ENCODE measurements at regions of chr3 and their contacts with region 1.

Region 1: DNA sequence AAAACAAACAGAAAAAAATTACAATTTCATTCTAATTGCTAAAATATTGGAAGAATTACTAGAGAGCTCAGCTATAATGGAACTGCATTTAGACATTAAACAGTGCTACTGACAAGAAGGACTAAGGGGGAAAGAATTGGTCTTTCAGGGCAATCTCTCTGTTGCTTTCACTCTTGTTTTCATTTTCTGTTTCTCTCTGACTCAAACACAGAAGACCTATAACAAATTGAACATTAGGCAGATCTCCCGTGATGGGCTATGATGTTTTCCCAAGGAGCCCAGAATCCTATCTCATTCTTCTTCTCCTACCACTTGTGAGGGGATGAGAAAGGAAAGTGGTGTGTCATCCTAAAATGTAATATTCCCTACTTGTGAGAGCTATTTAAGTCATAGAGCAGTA is 358.0 kb upstream of the TGFBR2 start:
- DNase-seq: no peak
- H3K4me3 ChIP-seq: no peak overlapping the region
- H3K27ac ChIP-seq: no peak overlapping the region
- H3K4me1 ChIP-seq: no peaks in the 10 kb centered on the region
- H3K27me3 ChIP-seq: no peaks in the 10 kb centered on the region
- CTCF ChIP-seq: no peak
- POLR2A ChIP-seq: no peak

Region 2: GRCh38 chr3:30188713-30189112 is 59.7 kb before region 1 on chr3:
- CTCF ChIA-PET with region 1: no interaction called
- POLR2A ChIA-PET with region 1: no interaction called
- dilution Hi-C with region 1: no loop called
- intact Hi-C with region 1: no loop called
- DNase-seq: no peak
- H3K4me3 ChIP-seq: no peak overlapping the region
- H3K27ac ChIP-seq: no peak overlapping the region
- H3K4me1 ChIP-seq: peaks cover 3% of the 10 kb centered on the region
- H3K27me3 ChIP-seq: peaks cover 2 to 10% of the 10 kb centered on the region in 2 experiments
- CTCF ChIP-seq: no peak
- POLR2A ChIP-seq: no peak

Region 3: GRCh38 chr3:30269751-30270445 is 21.5 kb after region 1 on chr3:
- CTCF ChIA-PET with region 1: no interaction called
- POLR2A ChIA-PET with region 1: no interaction called
- dilution Hi-C with region 1: no loop called
- intact Hi-C with region 1: loop called (anchors 2 kb)
- DNase-seq: no peak
- H3K4me3 ChIP-seq: no peak overlapping the region
- H3K27ac ChIP-seq: no peak overlapping the region
- H3K4me1 ChIP-seq: no peaks in the 10 kb centered on the region
- H3K27me3 ChIP-seq: no peaks in the 10 kb centered on the region
- CTCF ChIP-seq: no peak
- POLR2A ChIP-seq: no peak

Measured in endothelial cell of umbilical vein (primary cell).